Activated CD4-positive, alpha-beta memory T cell treated with anti-CD3 and anti-CD28 coated beads, Interleukin-2, amount 10 ng/mL, durations not matched to agents 7 days and 5 days (primary cell): ENCODE measurements at regions of chr4 and their contacts with region 1.

Region 1: DNA sequence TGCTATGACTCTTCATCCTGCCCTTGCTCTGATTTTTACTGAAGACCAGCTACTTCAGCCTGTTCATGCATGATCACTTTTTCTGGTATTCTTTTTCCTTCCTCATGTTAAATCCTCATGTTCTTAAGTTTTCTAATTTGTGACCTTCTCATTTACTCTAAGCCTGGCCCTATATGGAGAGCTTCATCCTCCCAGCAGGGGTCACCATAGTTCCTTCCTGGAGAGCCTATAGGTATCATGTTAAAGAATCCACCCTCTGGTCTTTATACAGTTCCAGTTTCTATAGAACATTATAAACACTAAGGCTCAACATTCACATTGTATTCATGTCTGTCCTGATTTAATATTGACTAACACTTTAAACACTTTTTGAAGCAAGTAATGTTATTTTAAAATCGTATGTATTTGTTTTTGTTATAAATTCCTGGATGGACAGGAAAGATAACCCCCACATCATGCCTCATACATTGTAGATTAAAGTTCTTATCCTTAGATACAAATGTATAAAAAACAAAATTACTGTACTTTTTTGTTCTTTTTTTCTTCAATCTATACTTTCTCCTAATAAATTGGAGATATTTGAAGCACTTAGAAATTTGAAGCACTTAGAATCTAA is 53.8 kb upstream of the OTUD4 start:
- DNase-seq: peak; percentile 57
- H3K4me3 Mint-ChIP-seq: no peak overlapping the region
- H3K27ac Mint-ChIP-seq: no peak overlapping the region
- H3K4me1 Mint-ChIP-seq: no peaks in the 10 kb centered on the region
- H3K27me3 Mint-ChIP-seq: peaks cover 16% of the 10 kb centered on the region

Region 2: DNA sequence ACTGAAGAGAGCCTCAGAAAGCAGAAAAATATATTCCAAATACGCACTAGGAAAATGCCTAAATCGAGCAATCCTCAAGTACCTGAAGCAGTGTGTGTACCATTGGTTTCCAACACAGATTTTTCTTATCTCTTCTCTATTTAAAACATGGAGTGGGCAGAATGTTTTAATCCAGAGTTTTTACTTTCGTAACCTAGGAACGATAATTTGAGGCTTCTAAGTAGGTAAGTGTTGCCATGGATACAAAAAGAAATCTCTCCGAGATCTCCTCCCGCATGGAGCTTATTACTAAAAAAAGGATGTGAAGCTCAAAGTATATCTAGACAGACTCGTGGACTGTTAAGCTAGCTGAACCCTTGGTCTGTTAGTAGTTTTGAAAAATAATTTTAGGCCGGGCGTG is 30.8 kb before region 1 on chr4:
- CTCF ChIA-PET with region 1: no interaction called
- POLR2A ChIA-PET with region 1: no interaction called
- DNase-seq: no peak
- H3K4me3 Mint-ChIP-seq: no peak overlapping the region
- H3K27ac Mint-ChIP-seq: no peak overlapping the region
- H3K4me1 Mint-ChIP-seq: no peaks in the 10 kb centered on the region
- H3K27me3 Mint-ChIP-seq: peaks cover 8% of the 10 kb centered on the region

Region 3: GRCh38 chr4:145557720-145558119 is 323.5 kb after region 1 on chr4:
- CTCF ChIA-PET with region 1: interaction called, 10 read pairs
- POLR2A ChIA-PET with region 1: no interaction called
- DNase-seq: peak; percentile 52
- H3K4me3 Mint-ChIP-seq: no peak overlapping the region
- H3K27ac Mint-ChIP-seq: no peak overlapping the region
- H3K4me1 Mint-ChIP-seq: no peaks in the 10 kb centered on the region
- H3K27me3 Mint-ChIP-seq: no peaks in the 10 kb centered on the region

Region 4: DNA sequence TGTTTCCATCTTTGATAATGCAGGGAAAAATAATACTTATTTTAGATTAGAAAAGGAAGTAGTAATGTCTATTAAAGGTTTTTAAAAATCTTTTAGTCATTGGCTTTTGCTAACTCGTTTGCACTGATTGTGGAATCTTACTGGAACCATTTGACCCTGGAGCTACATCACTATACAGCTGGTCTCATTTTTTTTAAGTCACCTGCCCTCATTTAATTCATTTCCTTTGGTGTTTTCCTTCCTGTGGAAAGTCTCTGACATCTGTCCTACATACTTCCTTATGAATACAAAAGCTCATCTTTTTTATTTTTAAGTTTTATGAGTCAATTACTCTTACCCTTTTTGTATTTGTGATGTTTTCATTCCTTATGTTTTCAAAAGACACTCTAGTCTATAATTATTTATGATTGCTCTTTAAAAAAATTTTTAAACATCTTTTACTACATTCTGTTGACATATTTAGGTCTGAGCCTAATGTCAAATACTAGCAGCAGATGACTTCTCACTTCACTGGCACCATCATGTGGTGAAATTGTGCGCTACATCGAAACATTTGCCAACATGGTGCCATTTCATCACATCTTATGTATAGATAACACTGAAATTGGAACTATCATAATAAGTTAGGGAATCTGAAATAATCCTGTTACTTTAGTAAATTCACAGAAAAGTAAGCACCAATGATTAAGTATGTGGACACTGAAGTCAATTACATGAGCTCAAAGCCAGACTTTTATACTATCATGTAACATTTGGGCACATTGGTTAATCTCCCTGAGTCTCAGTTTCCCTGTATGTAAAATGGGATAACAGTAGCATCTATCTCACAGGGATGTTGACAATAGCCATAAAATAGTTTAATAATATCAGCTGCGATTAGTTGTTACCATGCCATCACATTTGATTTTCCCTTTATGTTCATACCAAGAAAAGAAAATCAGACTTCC is 375.6 kb after region 1 on chr4:
- CTCF ChIA-PET with region 1: interaction called, 10 read pairs
- POLR2A ChIA-PET with region 1: no interaction called
- DNase-seq: peak; percentile 72
- H3K4me3 Mint-ChIP-seq: no peak overlapping the region
- H3K27ac Mint-ChIP-seq: no peak overlapping the region
- H3K4me1 Mint-ChIP-seq: no peaks in the 10 kb centered on the region
- H3K27me3 Mint-ChIP-seq: peaks cover 10% of the 10 kb centered on the region